ENCODE measurements at regions of chr15 and their contacts with region 1.

Region 1: GRCh38 chr15:90860942-90861675 is 7.3 kb upstream of the FURIN start:
- DNase-seq: no peak
- ATAC-seq: no peak
- H3K4me3 ChIP-seq: no peak overlapping the region
- H3K4me3 Mint-ChIP-seq: no peak overlapping the region
- H3K27ac ChIP-seq: no peak overlapping the region
- H3K27ac Mint-ChIP-seq: no peak overlapping the region
- H3K4me1 ChIP-seq: peaks cover 30% of the 10 kb centered on the region
- H3K4me1 Mint-ChIP-seq: peaks cover 29% of the 10 kb centered on the region
- H3K27me3 ChIP-seq: no peaks in the 10 kb centered on the region
- H3K27me3 Mint-ChIP-seq: no peaks in the 10 kb centered on the region
- CTCF ChIP-seq: no peak

Region 2: GRCh38 chr15:90808517-90809235 is 52.4 kb before region 1 on chr15:
- CTCF ChIA-PET with region 1: no interaction called
- POLR2A ChIA-PET with region 1: no interaction called
- intact Hi-C with region 1: loop called in 1 of 2 experiments (anchors 10 kb)
- DNase-seq: no peak
- ATAC-seq: no peak
- H3K4me3 ChIP-seq: no peak overlapping the region
- H3K4me3 Mint-ChIP-seq: no peak overlapping the region
- H3K27ac ChIP-seq: no peak overlapping the region
- H3K27ac Mint-ChIP-seq: no peak overlapping the region
- H3K4me1 ChIP-seq: peaks cover 11% of the 10 kb centered on the region
- H3K4me1 Mint-ChIP-seq: peaks cover 6% of the 10 kb centered on the region
- H3K27me3 ChIP-seq: no peaks in the 10 kb centered on the region
- H3K27me3 Mint-ChIP-seq: no peaks in the 10 kb centered on the region
- CTCF ChIP-seq: no peak

Measured in CD4-positive, alpha-beta T cell (primary cell).